ENCODE measurements at regions of chr9 and their contacts with region 1.

Region 1: GRCh38 chr9:20684035-20684872 is at the start of gene FOCAD:
- DNase-seq: peak; percentile 96
- H3K4me3 Mint-ChIP-seq: peak within 1 kb of the TSS; percentile 87
- H3K27ac Mint-ChIP-seq: peak within 1 kb of the TSS; percentile 82
- H3K4me1 Mint-ChIP-seq: peaks cover 21% of the 10 kb centered on the region
- H3K27me3 Mint-ChIP-seq: no peaks in the 10 kb centered on the region
- total RNA-seq, gene FOCAD: 32.2 and 36.0 TPM in 2 replicates

Region 2: DNA sequence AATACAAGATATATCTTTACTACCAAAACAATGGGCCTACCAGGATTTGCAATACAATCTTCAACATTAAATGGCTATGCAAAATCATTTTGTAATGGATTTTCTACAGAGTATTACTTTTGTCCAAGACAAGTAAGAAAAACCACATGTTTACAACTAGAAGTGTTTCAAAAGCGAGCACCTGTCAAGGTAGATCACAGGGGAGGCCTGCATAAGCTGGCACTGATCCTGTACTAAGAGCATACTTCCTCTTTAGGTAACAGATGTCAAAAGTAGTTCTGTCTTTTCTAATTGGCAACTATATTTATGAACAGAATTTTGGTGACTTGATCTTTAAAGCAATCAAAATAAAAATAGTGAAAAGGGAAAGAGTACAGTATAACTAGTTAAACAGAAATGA is 311.0 kb before region 1 on chr9:
- intact Hi-C with region 1: no loop called
- DNase-seq: no peak
- H3K4me3 Mint-ChIP-seq: no peak overlapping the region
- H3K27ac Mint-ChIP-seq: no peak overlapping the region
- H3K4me1 Mint-ChIP-seq: peaks cover 29% of the 10 kb centered on the region
- H3K27me3 Mint-ChIP-seq: no peaks in the 10 kb centered on the region

Region 3: GRCh38 chr9:20658677-20659473 is 25.4 kb before region 1 on chr9:
- intact Hi-C with region 1: loop called (anchors 2 kb)
- DNase-seq: no peak
- H3K4me3 Mint-ChIP-seq: no peak overlapping the region
- H3K27ac Mint-ChIP-seq: peak overlapping the region; percentile 69
- H3K4me1 Mint-ChIP-seq: peaks cover 1% of the 10 kb centered on the region
- H3K27me3 Mint-ChIP-seq: peaks cover 7% of the 10 kb centered on the region